Activated CD4-positive, alpha-beta memory T cell treated with anti-CD3 and anti-CD28 coated beads for 36 hours (primary cell): ENCODE measurements at regions of chr6 and their contacts with region 1.

Region 1: GRCh38 chr6:114096561-114097172 is 125.7 kb upstream of the HDAC2 start:
- DNase-seq: peak; percentile 10
- H3K4me3 Mint-ChIP-seq: no peak overlapping the region
- H3K27ac Mint-ChIP-seq: no peak overlapping the region
- H3K4me1 Mint-ChIP-seq: no peaks in the 10 kb centered on the region
- H3K27me3 Mint-ChIP-seq: peaks cover 4% of the 10 kb centered on the region

Region 2: DNA sequence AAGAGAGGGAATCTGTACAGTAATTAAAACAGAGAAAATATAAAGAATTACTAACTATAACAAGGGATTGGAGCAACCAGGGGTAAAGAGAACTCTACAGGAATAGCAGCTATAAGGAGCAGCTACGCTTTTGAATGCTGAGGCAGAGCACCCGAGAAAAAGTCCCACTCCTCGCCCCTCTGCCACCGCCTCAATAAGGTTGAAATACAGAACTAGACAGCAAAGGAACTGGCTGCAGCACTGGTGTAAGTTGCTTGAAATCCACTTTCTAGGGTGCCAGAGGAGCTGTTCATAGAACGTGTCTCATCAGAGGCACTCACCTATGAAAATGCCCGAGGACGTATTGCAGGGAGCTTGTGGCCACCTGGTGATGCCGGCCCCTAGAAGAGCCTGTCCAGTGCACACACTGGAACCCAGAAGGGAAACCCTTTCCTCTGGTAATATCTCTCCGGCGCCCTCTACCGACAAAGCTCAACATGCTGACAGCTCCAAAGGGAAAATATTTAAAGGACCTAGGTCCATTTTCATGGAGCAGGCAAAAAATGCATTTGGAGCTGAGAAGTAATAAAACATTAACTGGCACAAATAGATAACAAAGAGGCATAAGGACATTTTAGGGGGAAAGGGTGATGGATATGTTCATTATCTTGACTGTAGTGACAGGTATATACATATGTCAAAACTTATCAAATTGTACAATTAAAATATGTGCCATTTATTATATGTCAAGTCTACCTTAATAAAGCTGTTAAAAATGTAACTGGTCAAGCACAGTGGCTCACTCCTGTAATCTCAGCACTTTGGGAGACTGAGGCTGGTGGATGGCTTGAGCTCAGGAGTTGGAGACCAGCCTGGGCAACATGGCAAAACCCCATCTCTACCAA is 11.7 kb after region 1 on chr6:
- CTCF ChIA-PET with region 1: interaction called, 30 read pairs
- POLR2A ChIA-PET with region 1: no interaction called
- intact Hi-C with region 1: no loop called
- DNase-seq: peak; percentile 48
- H3K4me3 Mint-ChIP-seq: no peak overlapping the region
- H3K27ac Mint-ChIP-seq: no peak overlapping the region
- H3K4me1 Mint-ChIP-seq: no peaks in the 10 kb centered on the region
- H3K27me3 Mint-ChIP-seq: peaks cover 14% of the 10 kb centered on the region

Region 3: GRCh38 chr6:114144887-114145851 is 48.5 kb after region 1 on chr6:
- CTCF ChIA-PET with region 1: no interaction called
- POLR2A ChIA-PET with region 1: no interaction called
- intact Hi-C with region 1: no loop called
- DNase-seq: no peak
- H3K4me3 Mint-ChIP-seq: no peak overlapping the region
- H3K27ac Mint-ChIP-seq: no peak overlapping the region
- H3K4me1 Mint-ChIP-seq: no peaks in the 10 kb centered on the region
- H3K27me3 Mint-ChIP-seq: peaks cover 4% of the 10 kb centered on the region

Region 4: DNA sequence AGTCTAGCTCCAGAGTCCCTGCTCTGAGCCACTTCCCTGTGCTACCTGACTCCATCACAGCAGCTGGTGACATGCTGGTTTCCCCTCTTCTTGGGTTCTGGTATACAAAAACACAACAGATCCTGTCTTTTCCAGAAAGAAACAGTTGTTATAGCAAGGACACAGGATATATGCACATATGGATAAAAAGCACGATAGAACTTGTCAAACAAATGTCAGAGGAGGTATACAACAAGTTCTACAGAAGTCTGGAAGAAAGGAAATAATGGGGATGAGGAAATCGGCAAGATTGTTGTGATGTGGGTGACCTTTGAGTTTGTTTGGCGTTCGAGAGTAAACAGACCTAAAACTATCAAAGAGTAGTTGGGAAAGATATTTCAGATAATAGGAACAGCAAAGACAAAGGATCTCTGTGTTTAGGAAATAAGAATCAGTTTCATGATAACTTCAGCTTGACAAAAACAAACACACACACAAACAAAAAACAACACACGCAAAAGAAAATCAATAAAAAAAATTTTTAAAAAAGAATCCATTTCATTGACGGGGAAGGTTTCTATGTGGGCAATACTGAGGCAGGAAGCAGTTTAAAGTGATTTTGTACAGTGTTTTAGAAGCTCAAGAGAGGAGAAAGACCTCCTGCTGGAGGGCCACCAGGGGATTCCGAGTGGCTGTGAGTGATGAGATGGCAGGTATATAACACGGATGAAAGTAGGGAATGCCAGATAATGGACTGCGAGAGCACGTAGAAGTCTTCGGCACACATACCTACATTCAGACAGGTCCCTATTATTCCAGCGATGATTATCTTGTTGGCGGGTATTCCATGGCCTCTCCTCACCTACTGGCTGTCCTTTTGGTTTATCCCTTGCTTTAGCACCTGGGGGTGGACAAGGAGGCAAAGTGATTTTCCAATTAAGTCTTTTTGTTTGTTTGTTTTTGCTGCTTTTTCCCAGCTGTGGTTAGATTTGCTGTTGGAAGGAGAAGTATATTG is 71.2 kb after region 1 on chr6:
- CTCF ChIA-PET with region 1: no interaction called
- POLR2A ChIA-PET with region 1: no interaction called
- intact Hi-C with region 1: no loop called
- DNase-seq: no peak
- H3K4me3 Mint-ChIP-seq: no peak overlapping the region
- H3K27ac Mint-ChIP-seq: no peak overlapping the region
- H3K4me1 Mint-ChIP-seq: no peaks in the 10 kb centered on the region
- H3K27me3 Mint-ChIP-seq: peaks cover 6% of the 10 kb centered on the region

Region 5: GRCh38 chr6:114304304-114304887 is 207.7 kb after region 1 on chr6:
- CTCF ChIA-PET with region 1: no interaction called
- POLR2A ChIA-PET with region 1: no interaction called
- intact Hi-C with region 1: loop called (anchors 5 kb)
- DNase-seq: no peak
- H3K4me3 Mint-ChIP-seq: no peak overlapping the region
- H3K27ac Mint-ChIP-seq: no peak overlapping the region
- H3K4me1 Mint-ChIP-seq: no peaks in the 10 kb centered on the region
- H3K27me3 Mint-ChIP-seq: peaks cover 1% of the 10 kb centered on the region

Region 6: GRCh38 chr6:115891111-115891669 is 1794.5 kb after region 1 on chr6:
- CTCF ChIA-PET with region 1: no interaction called
- POLR2A ChIA-PET with region 1: no interaction called
- intact Hi-C with region 1: loop called (anchors 5 kb)
- DNase-seq: peak; percentile 15
- H3K4me3 Mint-ChIP-seq: no peak overlapping the region
- H3K27ac Mint-ChIP-seq: peak overlapping the region; percentile 58
- H3K4me1 Mint-ChIP-seq: peaks cover 6% of the 10 kb centered on the region
- H3K27me3 Mint-ChIP-seq: peaks cover 1% of the 10 kb centered on the region